H1 (cell line): ENCODE measurements at regions of chr17 and their contacts with region 1.

Region 1: GRCh38 chr17:6843241-6843880 is 11.8 kb upstream of the TEKT1 start:
- DNase-seq: no peak
- H3K4me3 ChIP-seq: no peak overlapping the region
- H3K27ac ChIP-seq: no peak overlapping the region
- H3K4me1 ChIP-seq: no peaks in the 10 kb centered on the region
- H3K27me3 ChIP-seq: no peaks in the 10 kb centered on the region
- CTCF ChIP-seq: peak in 2 of 3 experiments; percentile 32 to 33; a peak in 2 of 4 replicates
- EP300 ChIP-seq: no peak
- POLR2A ChIP-seq: no peak
- RAD21 ChIP-seq: peak; percentile 46 to 52; a peak in 3 of 4 replicates

Region 2: DNA sequence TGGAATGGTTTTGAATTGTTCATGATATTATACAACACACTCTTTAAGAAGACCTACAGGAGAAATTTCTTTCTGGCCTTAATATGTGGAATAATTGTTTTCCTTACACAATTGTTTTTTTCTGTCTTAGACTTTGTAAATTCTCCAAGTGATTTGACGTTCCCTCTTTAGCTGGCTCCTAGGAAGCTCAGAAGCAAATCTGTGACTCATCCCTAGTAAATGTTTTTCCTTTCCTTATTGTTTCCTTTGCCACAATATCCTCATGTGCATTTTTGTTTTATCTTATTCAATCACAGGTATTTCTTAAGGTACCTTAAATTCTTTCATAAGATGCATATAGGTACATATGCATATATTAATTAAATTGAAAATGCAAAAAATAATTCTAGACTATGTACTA is 216.3 kb before region 1 on chr17:
- CTCF ChIA-PET with region 1: no interaction called
- POLR2A ChIA-PET with region 1: no interaction called
- DNase-seq: no peak
- H3K4me3 ChIP-seq: no peak overlapping the region
- H3K27ac ChIP-seq: no peak overlapping the region
- H3K4me1 ChIP-seq: no peaks in the 10 kb centered on the region
- H3K27me3 ChIP-seq: no peaks in the 10 kb centered on the region
- CTCF ChIP-seq: no peak
- EP300 ChIP-seq: no peak
- POLR2A ChIP-seq: no peak
- RAD21 ChIP-seq: no peak

Region 3: GRCh38 chr17:6666077-6666521 is 177.3 kb before region 1 on chr17:
- CTCF ChIA-PET with region 1: interaction called, 28 read pairs
- POLR2A ChIA-PET with region 1: no interaction called
- DNase-seq: peak; percentile 66 to 72
- H3K4me3 ChIP-seq: no peak overlapping the region
- H3K27ac ChIP-seq: no peak overlapping the region
- H3K4me1 ChIP-seq: peaks cover 0 to 2% (median 1%) of the 10 kb centered on the region in 4 experiments; a peak in 1 of 7 replicates
- H3K27me3 ChIP-seq: peaks cover 0 to 6% (median 4%) of the 10 kb centered on the region in 4 experiments; a peak in 2 of 7 replicates
- CTCF ChIP-seq: peak; percentile 85 to 97 (median 97)
- EP300 ChIP-seq: no peak
- POLR2A ChIP-seq: no peak
- RAD21 ChIP-seq: peak; percentile 98 to 99

Region 4: GRCh38 chr17:6713130-6713917 is 130.0 kb before region 1 on chr17 and contains the start of gene SLC13A5:
- CTCF ChIA-PET with region 1: interaction called, 12 read pairs
- POLR2A ChIA-PET with region 1: no interaction called
- DNase-seq: peak; percentile 38 to 84
- H3K4me3 ChIP-seq: peak within 1 kb of the TSS; percentile 39 to 68 (median 60)
- H3K27ac ChIP-seq: no peak within 1 kb of the TSS
- H3K4me1 ChIP-seq: peaks cover 0 to 12% (median 9%) of the 10 kb centered on the region in 4 experiments; a peak in 6 of 7 replicates
- H3K27me3 ChIP-seq: peaks cover 9 to 38% (median 31%) of the 10 kb centered on the region in 4 experiments
- CTCF ChIP-seq: peak; percentile 47 to 96 (median 72)
- EP300 ChIP-seq: no peak
- POLR2A ChIP-seq: peak in 1 of 2 experiments; percentile 36; a peak in 1 of 3 replicates
- RAD21 ChIP-seq: peak in 1 of 2 experiments; percentile 52; a peak in 3 of 4 replicates
- total RNA-seq, gene SLC13A5: 1.8 and 2.6 TPM in 2 replicates

Region 5: DNA sequence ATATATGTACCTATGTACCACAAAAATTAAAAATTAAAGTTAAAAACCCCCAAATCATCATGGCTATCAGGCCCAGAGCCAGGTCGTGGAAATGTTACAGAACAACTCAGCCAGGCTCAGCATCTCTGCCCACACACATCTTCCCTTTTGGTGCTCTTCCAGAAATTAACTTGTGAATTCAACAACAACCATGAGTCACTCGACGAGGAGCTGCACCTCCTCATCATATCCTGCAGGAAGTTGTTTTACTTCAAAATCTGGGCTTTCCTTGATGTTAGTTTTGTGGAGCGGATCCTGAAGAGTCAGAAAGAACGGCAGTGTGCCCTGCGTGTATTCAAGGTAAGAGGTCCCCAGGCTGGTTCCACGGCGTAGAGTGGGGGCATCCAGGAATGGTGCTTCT is 56.7 kb before region 1 on chr17:
- CTCF ChIA-PET with region 1: interaction called, 12 read pairs
- POLR2A ChIA-PET with region 1: no interaction called
- DNase-seq: no peak
- H3K4me3 ChIP-seq: no peak overlapping the region
- H3K27ac ChIP-seq: no peak overlapping the region
- H3K4me1 ChIP-seq: no peaks in the 10 kb centered on the region
- H3K27me3 ChIP-seq: no peaks in the 10 kb centered on the region
- CTCF ChIP-seq: no peak
- EP300 ChIP-seq: no peak
- POLR2A ChIP-seq: no peak
- RAD21 ChIP-seq: no peak

Region 6: DNA sequence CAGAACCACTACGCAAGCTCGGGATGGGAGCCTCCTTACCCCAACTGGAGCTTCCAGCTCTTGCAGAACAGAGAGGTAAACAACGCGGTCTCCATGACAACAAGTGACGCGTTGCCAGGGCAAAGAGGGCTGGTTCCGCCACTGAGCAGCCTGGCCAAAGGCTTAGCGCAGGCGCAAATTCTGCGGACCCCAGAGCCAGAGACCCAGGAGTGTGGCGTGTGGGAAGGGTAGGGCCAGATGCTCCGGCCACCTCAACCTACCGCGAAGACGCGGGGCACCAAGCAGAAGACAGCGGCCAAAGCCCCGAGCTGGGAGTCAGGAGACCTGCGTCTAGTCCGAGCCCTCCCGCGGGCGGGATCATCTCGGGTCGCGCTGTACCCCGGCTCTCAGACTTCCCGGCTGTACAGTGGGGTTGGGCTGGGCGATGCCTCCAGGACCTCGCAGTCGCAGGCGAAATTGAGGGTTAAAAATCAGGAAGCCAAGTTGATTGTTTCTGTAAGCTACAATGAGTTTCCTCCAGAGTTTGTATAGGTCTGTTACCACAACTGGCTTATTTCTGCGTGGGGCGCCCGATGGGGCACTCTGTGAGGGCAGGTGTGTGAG is 11.6 kb before region 1 on chr17 and contains the start of gene TEKT1:
- CTCF ChIA-PET with region 1: interaction called, 23 read pairs
- POLR2A ChIA-PET with region 1: no interaction called
- DNase-seq: peak; percentile 54 to 94
- H3K4me3 ChIP-seq: peak within 1 kb of the TSS; percentile 34 to 56 (median 46)
- H3K27ac ChIP-seq: no peak within 1 kb of the TSS
- H3K4me1 ChIP-seq: peaks cover 0 to 3% (median 0%) of the 10 kb centered on the region in 4 experiments; a peak in 2 of 7 replicates
- H3K27me3 ChIP-seq: peaks cover 0 to 12% (median 5%) of the 10 kb centered on the region in 4 experiments; a peak in 4 of 7 replicates
- CTCF ChIP-seq: no peak
- EP300 ChIP-seq: no peak
- POLR2A ChIP-seq: no peak
- RAD21 ChIP-seq: no peak
- total RNA-seq, gene TEKT1: not detected in 2 replicates

Region 7: DNA sequence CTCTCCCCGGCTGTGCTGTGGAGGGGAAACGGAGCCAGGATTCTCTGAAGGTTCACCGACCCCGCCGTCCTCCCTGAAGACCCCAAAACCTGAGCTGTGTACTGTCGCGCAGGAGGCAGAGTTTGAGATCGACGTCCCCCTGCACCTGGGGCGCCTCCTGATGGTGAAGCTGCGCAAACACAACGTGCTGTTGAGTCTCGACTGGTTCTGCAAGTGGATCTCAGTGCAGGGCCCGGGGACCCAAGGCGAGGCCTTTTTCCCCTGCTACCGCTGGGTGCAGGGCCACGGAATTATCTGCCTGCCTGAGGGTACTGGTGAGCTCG is 50.8 kb after region 1 on chr17:
- CTCF ChIA-PET with region 1: interaction called, 44 read pairs
- POLR2A ChIA-PET with region 1: no interaction called
- DNase-seq: peak; percentile 34 to 90
- H3K4me3 ChIP-seq: peak overlapping the region; percentile 30 to 84 (median 64)
- H3K27ac ChIP-seq: no peak overlapping the region
- H3K4me1 ChIP-seq: peaks cover 0 to 5% (median 0%) of the 10 kb centered on the region in 4 experiments; a peak in 1 of 7 replicates
- H3K27me3 ChIP-seq: peaks cover 0 to 14% (median 8%) of the 10 kb centered on the region in 4 experiments; a peak in 5 of 7 replicates
- CTCF ChIP-seq: peak; percentile 89 to 98 (median 98)
- EP300 ChIP-seq: no peak; a peak in 1 of 3 replicates
- POLR2A ChIP-seq: no peak
- RAD21 ChIP-seq: peak; percentile 77 to 82

Region 8: DNA sequence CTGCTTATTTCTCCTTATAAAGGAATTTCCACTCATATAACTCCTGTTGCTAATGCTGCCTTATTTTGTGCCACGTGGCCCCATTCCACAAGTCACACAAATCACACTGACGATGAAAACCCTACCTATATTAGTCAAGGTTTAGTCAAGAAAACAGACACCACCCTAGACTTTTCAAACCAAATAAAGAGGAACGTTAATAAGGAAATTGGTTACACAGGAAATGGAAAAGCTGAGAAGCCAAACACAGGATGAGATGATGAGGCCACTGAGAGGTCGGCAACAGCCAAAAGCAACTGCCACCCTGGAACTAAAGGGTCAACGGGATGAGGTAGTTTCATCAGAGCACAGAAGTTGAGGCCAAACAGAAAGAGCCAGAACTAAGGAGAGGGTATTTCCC is 105.2 kb after region 1 on chr17:
- CTCF ChIA-PET with region 1: no interaction called
- POLR2A ChIA-PET with region 1: no interaction called
- DNase-seq: no peak
- H3K4me3 ChIP-seq: no peak overlapping the region
- H3K27ac ChIP-seq: no peak overlapping the region
- H3K4me1 ChIP-seq: no peaks in the 10 kb centered on the region
- H3K27me3 ChIP-seq: no peaks in the 10 kb centered on the region
- CTCF ChIP-seq: no peak
- EP300 ChIP-seq: no peak
- POLR2A ChIP-seq: no peak
- RAD21 ChIP-seq: no peak

Region 9: DNA sequence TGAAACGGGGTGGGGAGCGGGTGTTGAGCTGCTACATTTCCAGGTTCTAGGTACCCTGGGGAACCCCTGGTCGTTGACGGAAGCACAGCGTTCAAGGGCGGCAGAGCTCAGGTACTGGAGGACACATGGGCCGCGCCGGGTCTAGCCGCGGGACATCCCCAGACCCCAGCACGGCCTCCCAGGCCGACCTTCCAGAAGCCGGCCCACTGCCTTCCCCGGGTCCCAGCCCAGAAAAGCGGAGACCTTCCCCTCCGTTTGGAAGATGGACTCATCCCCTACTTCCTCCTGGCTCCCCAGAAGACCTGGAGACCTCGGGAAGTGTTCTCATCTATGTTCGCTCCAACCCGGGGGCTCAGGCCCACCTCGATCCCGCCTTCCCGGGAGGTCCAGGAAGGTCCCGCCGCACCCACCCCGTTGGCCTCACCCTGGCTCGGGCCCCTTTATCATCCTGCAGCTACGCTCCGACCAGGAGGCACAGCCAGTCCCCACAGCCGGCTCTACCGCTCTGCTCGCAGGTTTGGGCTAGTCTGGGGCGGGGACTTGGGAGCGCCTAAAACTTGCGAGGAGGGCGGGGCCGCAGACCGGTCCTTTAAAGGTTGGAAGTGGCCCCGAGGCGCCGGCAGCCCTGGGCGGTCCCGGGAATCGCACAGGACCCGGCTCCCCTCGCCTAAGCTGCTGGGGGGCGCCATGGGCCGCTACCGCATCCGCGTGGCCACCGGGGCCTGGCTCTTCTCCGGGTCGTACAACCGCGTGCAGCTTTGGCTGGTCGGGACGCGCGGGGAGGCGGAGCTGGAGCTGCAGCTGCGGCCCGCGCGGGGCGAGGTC is 152.3 kb after region 1 on chr17 and contains the start of gene ALOX12:
- CTCF ChIA-PET with region 1: interaction called, 11 read pairs
- POLR2A ChIA-PET with region 1: interaction called, 3 read pairs
- DNase-seq: peak in 1 of 2 experiments; percentile 77
- H3K4me3 ChIP-seq: peak within 1 kb of the TSS; percentile 37 to 66 (median 46)
- H3K27ac ChIP-seq: no peak within 1 kb of the TSS
- H3K4me1 ChIP-seq: peaks cover 0 to 9% (median 1%) of the 10 kb centered on the region in 4 experiments; a peak in 2 of 7 replicates
- H3K27me3 ChIP-seq: peaks cover 2 to 39% (median 25%) of the 10 kb centered on the region in 4 experiments
- CTCF ChIP-seq: no peak
- EP300 ChIP-seq: no peak
- POLR2A ChIP-seq: no peak
- RAD21 ChIP-seq: no peak
- total RNA-seq, gene ALOX12: 1.4 and 2.0 TPM in 2 replicates

Region 10: DNA sequence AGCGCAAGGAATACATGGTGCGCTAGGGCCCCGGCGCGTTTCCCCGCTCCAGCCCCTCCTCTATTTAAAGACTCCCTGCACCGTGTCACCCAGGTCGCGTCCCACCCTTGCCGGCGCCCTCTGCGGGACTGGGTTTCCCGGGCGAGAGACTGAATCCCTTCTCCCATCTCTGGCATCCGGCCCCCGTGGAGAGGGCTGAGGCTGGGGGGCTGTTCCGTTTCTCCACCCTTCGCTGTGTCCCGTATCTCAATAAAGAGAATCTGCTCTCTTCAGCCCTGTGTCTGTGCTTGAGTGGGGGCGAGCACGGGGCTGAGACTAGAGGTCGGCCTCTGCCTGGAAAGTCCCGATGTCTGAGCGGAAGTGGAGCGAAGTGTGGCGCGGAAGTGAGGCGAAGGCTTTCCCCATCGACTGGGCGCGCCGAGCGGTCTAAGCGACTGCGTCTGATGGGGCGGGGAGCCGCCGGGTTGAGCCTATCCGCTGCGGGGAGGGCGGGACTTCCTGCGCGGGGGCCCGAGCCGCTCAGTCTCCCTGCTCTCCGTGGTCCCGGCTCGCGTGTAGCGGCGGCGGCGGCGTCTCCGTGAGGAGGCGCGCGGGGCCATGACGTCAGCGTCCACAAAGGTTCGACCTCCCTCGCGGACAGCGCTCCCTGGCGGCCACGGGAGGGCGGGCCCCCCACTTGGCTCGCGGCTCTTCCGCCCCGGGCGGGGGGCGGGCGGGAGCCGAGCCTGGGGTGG is 171.1 kb after region 1 on chr17:
- CTCF ChIA-PET with region 1: no interaction called
- POLR2A ChIA-PET with region 1: no interaction called
- DNase-seq: peak; percentile 81 to 92
- H3K4me3 ChIP-seq: peak overlapping the region; percentile 86 to 100 (median 88)
- H3K27ac ChIP-seq: peak overlapping the region; percentile 59; the same call in 1 of the 2 replicates
- H3K4me1 ChIP-seq: peaks cover 0 to 23% (median 11%) of the 10 kb centered on the region in 4 experiments; a peak in 6 of 7 replicates
- H3K27me3 ChIP-seq: no peaks in the 10 kb centered on the region
- CTCF ChIP-seq: peak; percentile 44 to 66 (median 47); a peak in 3 of 4 replicates
- EP300 ChIP-seq: 0 out of 3 replicates have a peak, but pooled peaks of 1 of the 2 experiments have one; percentile 9
- POLR2A ChIP-seq: peak in 1 of 2 experiments; percentile 55; a peak in 2 of 3 replicates
- RAD21 ChIP-seq: 0 out of 4 replicates have a peak, but pooled peaks of 1 of the 2 experiments have one; percentile 7